BJ (cell line): ENCODE measurements at regions of chrX and their contacts with region 1.

Region 1: DNA sequence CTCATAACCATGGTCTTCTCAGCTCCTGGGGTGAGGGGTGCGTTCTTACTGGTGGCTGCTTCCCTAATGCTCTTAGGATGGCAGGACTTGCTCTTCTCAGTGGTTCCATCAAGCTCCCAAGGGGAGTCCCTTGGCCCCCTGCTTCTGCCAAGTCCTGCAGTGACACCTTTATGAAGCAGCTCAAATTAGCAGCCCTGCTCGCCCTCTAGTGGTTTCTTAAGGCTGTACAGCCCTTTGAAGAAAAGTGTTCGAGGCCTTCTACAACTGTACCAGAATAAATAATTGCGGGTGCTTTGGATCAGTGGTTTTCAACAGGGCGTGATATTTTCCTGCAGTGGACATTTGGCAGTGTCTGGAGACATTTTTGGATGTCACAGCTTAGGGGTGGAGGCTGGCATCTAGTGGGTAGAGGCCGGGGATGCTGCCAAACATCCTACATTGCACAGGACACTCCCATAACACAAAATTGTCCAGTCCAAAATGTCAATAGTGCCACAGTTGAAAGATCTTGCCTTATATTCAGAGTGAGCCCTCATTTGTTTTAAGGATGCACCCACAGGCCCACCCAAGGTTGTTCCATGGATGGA is 204.7 kb upstream of the S100G start:
- DNase-seq: no peak
- H3K4me3 ChIP-seq: no peak overlapping the region
- H3K27me3 ChIP-seq: no peaks in the 10 kb centered on the region
- CTCF ChIP-seq: peak; percentile 64

Region 2: GRCh38 chrX:15714529-15714928 is 730.7 kb before region 1 on chrX:
- CTCF ChIA-PET with region 1: no interaction called
- POLR2A ChIA-PET with region 1: no interaction called
- DNase-seq: no peak
- H3K4me3 ChIP-seq: no peak overlapping the region
- H3K27me3 ChIP-seq: no peaks in the 10 kb centered on the region
- CTCF ChIP-seq: no peak

Region 3: GRCh38 chrX:16462912-16463311 is 17.7 kb after region 1 on chrX:
- CTCF ChIA-PET with region 1: interaction called, 16 read pairs
- POLR2A ChIA-PET with region 1: no interaction called
- DNase-seq: no peak
- H3K4me3 ChIP-seq: no peak overlapping the region
- H3K27me3 ChIP-seq: no peaks in the 10 kb centered on the region
- CTCF ChIP-seq: no peak

Region 4: DNA sequence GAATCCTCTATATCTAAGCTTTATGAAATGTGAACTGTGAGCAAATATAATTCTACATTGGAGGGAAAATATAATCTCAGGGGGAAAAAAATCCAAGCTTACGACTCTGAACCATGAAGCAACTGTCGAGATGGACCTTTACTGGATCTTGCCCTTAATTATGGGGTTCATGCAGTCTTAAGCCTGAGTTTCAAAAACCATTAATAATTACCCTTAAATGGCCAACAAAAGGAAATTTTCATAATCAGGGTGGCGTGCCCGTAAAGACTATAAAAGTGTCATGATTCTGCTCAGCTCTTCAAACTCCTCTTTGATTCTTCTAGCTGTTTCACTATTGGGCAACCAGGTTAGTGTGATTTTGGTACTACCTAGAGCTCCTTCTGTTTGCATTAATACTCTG is 204.6 kb after region 1 on chrX and contains the start of gene S100G:
- CTCF ChIA-PET with region 1: interaction called, 11 read pairs
- POLR2A ChIA-PET with region 1: no interaction called
- DNase-seq: no peak
- H3K4me3 ChIP-seq: no peak within 1 kb of the TSS
- H3K27me3 ChIP-seq: no peaks in the 10 kb centered on the region
- CTCF ChIP-seq: no peak
- polyA plus RNA-seq, gene S100G: not detected in 2 replicates